CD4-positive, alpha-beta T cell (primary cell): ENCODE measurements at regions of chr12 and their contacts with region 1.

Region 1: GRCh38 chr12:71746983-71747611 is 7.6 kb upstream of the RAB21 start:
- DNase-seq: peak; percentile 9 to 79 (median 36)
- ATAC-seq: peak; percentile 99
- H3K4me3 ChIP-seq: no peak overlapping the region
- H3K4me3 Mint-ChIP-seq: no peak overlapping the region
- H3K27ac ChIP-seq: no peak overlapping the region
- H3K27ac Mint-ChIP-seq: no peak overlapping the region
- H3K4me1 ChIP-seq: no peaks in the 10 kb centered on the region
- H3K4me1 Mint-ChIP-seq: no peaks in the 10 kb centered on the region
- H3K27me3 ChIP-seq: peaks cover 0 to 9% of the 10 kb centered on the region in 2 experiments
- H3K27me3 Mint-ChIP-seq: peaks cover 32% of the 10 kb centered on the region
- CTCF ChIP-seq: peak; percentile 86

Region 2: DNA sequence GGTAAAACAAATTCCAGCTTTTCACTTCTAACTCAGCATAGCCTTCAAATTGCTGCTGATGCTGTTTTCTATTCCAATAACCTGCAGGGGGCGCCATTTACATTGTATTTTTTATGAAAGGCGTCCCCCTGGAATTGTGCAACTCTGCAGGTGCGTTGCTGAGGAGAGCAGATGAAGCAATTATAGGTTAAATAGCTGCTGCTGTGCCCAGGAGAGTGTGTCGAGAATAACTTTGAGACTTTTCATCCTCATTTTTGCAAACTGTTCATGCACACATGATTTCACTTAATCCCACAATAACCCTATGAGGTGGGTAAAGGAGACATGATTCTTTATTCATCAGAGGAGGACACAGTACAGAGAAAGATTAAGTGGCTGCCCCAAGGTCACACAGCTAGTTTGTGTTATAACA is 1846.4 kb before region 1 on chr12:
- CTCF ChIA-PET with region 1: no interaction called
- POLR2A ChIA-PET with region 1: no interaction called
- intact Hi-C with region 1: loop called in 1 of 2 experiments (anchors 10 kb)
- DNase-seq: peak; percentile 26 to 71 (median 48)
- ATAC-seq: peak; percentile 29
- H3K4me3 ChIP-seq: no peak overlapping the region
- H3K4me3 Mint-ChIP-seq: no peak overlapping the region
- H3K27ac ChIP-seq: no peak overlapping the region
- H3K27ac Mint-ChIP-seq: no peak overlapping the region
- H3K4me1 ChIP-seq: no peaks in the 10 kb centered on the region
- H3K4me1 Mint-ChIP-seq: no peaks in the 10 kb centered on the region
- H3K27me3 ChIP-seq: no peaks in the 10 kb centered on the region
- H3K27me3 Mint-ChIP-seq: peaks cover 8% of the 10 kb centered on the region
- CTCF ChIP-seq: peak; percentile 87

Region 3: GRCh38 chr12:70733385-70733784 is 1013.7 kb before region 1 on chr12:
- CTCF ChIA-PET with region 1: no interaction called
- POLR2A ChIA-PET with region 1: no interaction called
- intact Hi-C with region 1: loop called (anchors 5 kb)
- DNase-seq: peak in 3 of 14 experiments; percentile 39 to 40 (median 40)
- ATAC-seq: peak; percentile 68
- H3K4me3 ChIP-seq: no peak overlapping the region
- H3K4me3 Mint-ChIP-seq: no peak overlapping the region
- H3K27ac ChIP-seq: no peak overlapping the region
- H3K27ac Mint-ChIP-seq: no peak overlapping the region
- H3K4me1 ChIP-seq: no peaks in the 10 kb centered on the region
- H3K4me1 Mint-ChIP-seq: no peaks in the 10 kb centered on the region
- H3K27me3 ChIP-seq: no peaks in the 10 kb centered on the region
- H3K27me3 Mint-ChIP-seq: peaks cover 10% of the 10 kb centered on the region
- CTCF ChIP-seq: peak; percentile 56

Region 4: GRCh38 chr12:71415336-71416231 is 331.5 kb before region 1 on chr12:
- CTCF ChIA-PET with region 1: interaction called, 24 read pairs
- POLR2A ChIA-PET with region 1: interaction called, 7 read pairs
- intact Hi-C with region 1: loop called (anchors 1 kb)
- DNase-seq: peak in 5 of 14 experiments; percentile 10 to 71 (median 56)
- ATAC-seq: peak; percentile 52
- H3K4me3 ChIP-seq: no peak overlapping the region
- H3K4me3 Mint-ChIP-seq: no peak overlapping the region
- H3K27ac ChIP-seq: no peak overlapping the region
- H3K27ac Mint-ChIP-seq: no peak overlapping the region
- H3K4me1 ChIP-seq: no peaks in the 10 kb centered on the region
- H3K4me1 Mint-ChIP-seq: no peaks in the 10 kb centered on the region
- H3K27me3 ChIP-seq: peaks cover 0 to 5% of the 10 kb centered on the region in 2 experiments
- H3K27me3 Mint-ChIP-seq: peaks cover 6% of the 10 kb centered on the region
- CTCF ChIP-seq: peak; percentile 79

Region 5: DNA sequence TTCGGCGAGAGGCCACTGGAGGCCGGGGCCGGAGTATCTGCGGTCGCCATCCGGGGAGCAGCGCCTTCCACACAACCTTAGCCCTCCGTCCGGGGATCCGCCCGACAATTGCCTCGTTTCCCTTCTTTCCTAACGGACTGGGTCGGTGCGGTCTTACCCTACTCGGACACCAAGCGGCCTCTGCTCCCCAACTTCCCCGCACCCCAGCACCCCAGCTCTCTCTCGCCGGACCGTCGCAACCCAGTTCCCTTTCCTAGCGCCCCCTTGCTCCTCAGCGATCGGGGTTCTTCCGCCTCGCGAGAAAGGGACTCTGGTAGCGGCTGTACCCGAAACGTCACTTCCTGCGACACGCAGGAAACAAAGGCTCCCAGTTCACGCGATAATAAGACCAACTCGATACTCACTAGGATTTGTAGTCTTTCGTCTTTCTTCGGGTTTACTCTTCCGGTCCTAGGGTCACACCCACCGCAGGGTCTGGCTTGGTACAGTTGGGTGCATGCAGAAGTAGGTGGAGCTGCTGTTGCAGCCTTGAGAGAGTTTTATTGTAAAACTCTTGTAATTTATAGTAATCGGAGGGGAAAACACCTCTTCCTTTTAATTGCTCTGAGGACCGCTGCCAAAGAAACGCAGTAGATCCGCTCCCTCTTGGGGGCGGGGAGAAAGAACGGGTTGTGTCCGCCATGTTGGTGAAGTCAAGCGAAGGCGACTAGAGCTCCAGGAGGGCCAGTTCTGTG is 83.4 kb before region 1 on chr12 and contains the start of gene ZFC3H1:
- CTCF ChIA-PET with region 1: interaction called, 8 read pairs
- POLR2A ChIA-PET with region 1: interaction called, 23 read pairs
- intact Hi-C with region 1: loop called (anchors 1 to 2 kb)
- DNase-seq: peak; percentile 80 to 99 (median 85)
- ATAC-seq: peak; percentile 77
- H3K4me3 ChIP-seq: peak within 1 kb of the TSS; percentile 91
- H3K4me3 Mint-ChIP-seq: peak within 1 kb of the TSS; percentile 99
- H3K27ac ChIP-seq: peak within 1 kb of the TSS; percentile 98
- H3K27ac Mint-ChIP-seq: peak within 1 kb of the TSS; percentile 97
- H3K4me1 ChIP-seq: peaks cover 17% of the 10 kb centered on the region
- H3K4me1 Mint-ChIP-seq: peaks cover 58% of the 10 kb centered on the region
- H3K27me3 ChIP-seq: no peaks in the 10 kb centered on the region
- H3K27me3 Mint-ChIP-seq: no peaks in the 10 kb centered on the region
- CTCF ChIP-seq: no peak
- total RNA-seq, gene ZFC3H1: 131 to 135 TPM

Region 6: DNA sequence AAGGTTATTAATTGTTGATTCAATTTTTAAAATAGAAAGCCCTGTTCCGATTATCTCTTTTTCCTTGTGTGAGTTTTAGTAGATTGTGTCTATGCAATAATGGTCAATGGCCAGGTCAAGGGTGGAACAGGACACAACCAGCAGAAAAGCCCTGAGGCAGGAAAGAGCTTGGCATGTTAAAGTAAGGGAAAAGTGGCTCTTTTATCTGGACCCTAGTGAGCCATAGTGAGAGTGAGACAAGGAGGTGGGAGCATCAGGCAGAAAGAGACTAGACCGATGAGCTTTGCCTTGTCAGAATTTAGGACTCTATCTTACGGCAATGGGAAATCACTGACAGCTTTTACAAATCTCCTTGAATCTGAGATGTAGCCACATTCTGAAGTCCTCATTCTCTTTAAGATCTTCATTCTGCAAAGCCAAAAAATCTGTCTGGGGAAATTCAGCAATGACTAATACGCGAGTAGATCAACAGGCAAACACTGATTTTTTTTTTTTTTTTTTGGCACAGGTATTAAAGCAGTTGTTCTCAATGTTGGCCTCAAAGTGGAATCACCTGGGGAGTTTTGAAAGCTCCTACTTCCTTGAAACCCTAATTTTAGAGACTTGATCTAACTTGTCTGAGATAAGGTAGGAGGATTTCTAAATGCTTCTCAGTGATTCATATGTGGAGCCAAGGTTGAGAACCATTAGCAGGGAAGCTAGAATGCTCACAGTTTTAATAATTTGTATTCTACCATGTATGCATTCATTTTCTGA is 27.3 kb before region 1 on chr12:
- CTCF ChIA-PET with region 1: no interaction called
- POLR2A ChIA-PET with region 1: no interaction called
- intact Hi-C with region 1: no loop called
- DNase-seq: no peak
- ATAC-seq: no peak
- H3K4me3 ChIP-seq: no peak overlapping the region
- H3K4me3 Mint-ChIP-seq: no peak overlapping the region
- H3K27ac ChIP-seq: no peak overlapping the region
- H3K27ac Mint-ChIP-seq: no peak overlapping the region
- H3K4me1 ChIP-seq: no peaks in the 10 kb centered on the region
- H3K4me1 Mint-ChIP-seq: no peaks in the 10 kb centered on the region
- H3K27me3 ChIP-seq: no peaks in the 10 kb centered on the region
- H3K27me3 Mint-ChIP-seq: no peaks in the 10 kb centered on the region
- CTCF ChIP-seq: no peak